WTC11 (cell line): ENCODE measurements at regions of chr7 and their contacts with region 1.

Region 1: GRCh38 chr7:129285111-129285510 is 60.3 kb downstream of the AHCYL2 start:
- DNase-seq: no peak
- ATAC-seq: no peak
- H3K4me3 Mint-ChIP-seq: no peak overlapping the region
- H3K27ac Mint-ChIP-seq: peak overlapping the region; percentile 78; the same call in 1 of the 2 replicates
- H3K4me1 Mint-ChIP-seq: peaks cover 26% of the 10 kb centered on the region
- H3K27me3 Mint-ChIP-seq: no peaks in the 10 kb centered on the region
- CTCF ChIP-seq: no peak

Region 2: DNA sequence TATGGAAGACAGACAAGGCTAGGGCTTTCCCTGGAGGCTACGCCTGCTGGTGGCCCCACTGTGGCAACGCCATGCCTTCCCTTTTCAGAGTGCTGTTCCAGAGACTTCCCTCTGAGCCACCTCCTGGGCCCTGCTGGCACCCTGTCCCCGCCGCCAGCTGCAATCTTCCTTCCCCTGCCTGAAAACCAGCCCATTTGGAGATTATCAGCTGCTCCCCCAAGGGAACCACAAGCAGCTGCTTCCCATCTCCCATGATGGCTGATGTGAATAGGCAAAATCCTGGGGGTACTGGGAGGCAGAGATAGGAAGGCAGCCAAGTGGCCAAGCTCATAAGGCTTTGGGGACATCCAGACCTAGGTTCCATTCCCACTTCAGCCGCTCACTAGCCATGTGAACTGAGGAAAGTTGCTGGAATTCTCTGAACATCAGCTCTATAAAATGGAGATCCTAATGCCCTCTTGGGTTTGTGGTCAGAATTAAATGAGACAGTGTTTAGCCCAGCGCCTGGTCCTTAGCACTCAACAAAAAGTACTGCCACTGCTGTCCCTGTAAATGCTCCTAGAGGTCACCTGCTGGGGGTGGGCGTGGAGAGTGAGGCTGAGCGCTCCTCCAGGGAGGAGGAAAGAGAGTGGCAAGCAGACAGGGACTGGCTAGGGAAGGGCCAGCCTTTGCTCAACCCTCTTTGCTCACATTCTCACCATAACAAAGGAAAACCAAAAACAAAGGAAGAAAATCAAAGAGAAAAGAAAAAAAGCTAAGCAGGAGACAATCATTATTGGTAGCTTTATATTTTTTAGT is 134.7 kb before region 1 on chr7:
- CTCF ChIA-PET with region 1: no interaction called
- POLR2A ChIA-PET with region 1: no interaction called
- DNase-seq: peak; percentile 54
- ATAC-seq: peak; percentile 95
- H3K4me3 Mint-ChIP-seq: no peak overlapping the region
- H3K27ac Mint-ChIP-seq: peak overlapping the region; percentile 26; the same call in 1 of the 2 replicates
- H3K4me1 Mint-ChIP-seq: peaks cover 21% of the 10 kb centered on the region
- H3K27me3 Mint-ChIP-seq: peaks cover 8% of the 10 kb centered on the region
- CTCF ChIP-seq: no peak

Region 3: GRCh38 chr7:129298268-129298893 is 13.3 kb after region 1 on chr7:
- CTCF ChIA-PET with region 1: interaction called, 17 read pairs
- POLR2A ChIA-PET with region 1: no interaction called
- DNase-seq: peak; percentile 50
- ATAC-seq: no peak
- H3K4me3 Mint-ChIP-seq: no peak overlapping the region
- H3K27ac Mint-ChIP-seq: no peak overlapping the region
- H3K4me1 Mint-ChIP-seq: no peaks in the 10 kb centered on the region
- H3K27me3 Mint-ChIP-seq: no peaks in the 10 kb centered on the region
- CTCF ChIP-seq: peak; percentile 48; the same call in 1 of the 2 replicates

Region 4: DNA sequence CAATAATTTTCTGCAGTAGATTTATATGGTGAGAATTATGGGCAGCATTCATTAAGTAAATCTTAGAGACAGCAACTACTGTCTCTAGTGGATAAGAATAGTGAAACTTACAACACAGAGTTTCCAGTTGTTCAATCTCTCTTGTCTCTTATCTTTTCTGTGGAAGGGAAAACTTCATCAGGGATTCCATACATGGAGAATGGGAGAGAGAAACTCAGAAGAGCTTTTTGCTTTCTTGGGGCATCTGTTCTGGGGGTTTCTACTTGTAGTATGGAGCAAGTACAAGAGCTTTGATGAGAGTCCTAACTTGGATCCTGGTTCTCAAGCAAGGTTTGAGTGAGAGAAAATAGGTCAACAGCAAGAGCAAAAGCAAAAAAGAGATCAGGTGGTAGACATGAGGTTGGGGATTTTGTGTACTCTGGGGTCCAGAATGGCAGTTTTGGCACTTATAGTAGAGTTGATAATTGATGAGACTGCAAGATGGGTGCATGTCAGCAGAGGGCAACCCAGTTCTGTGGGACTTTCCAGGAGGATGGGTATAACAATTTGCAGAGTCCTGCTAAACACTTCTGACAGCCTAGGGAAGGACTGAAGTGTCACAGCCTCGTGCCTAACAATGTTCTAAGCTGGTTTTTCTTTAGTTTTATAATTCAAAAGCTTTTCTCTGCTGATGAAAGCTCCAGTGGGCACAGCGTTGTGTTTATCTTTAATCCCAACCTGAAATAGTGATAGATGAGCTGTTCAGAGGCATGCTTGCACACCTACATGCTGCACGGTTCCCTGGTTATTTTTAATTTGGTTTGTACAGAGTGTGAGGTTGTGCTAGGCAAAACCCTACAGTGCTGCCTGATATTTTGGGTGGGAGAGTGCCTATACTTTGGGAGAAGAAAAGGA is 117.1 kb after region 1 on chr7:
- CTCF ChIA-PET with region 1: no interaction called
- POLR2A ChIA-PET with region 1: no interaction called
- DNase-seq: no peak
- ATAC-seq: peak; percentile 51
- H3K4me3 Mint-ChIP-seq: no peak overlapping the region
- H3K27ac Mint-ChIP-seq: no peak overlapping the region
- H3K4me1 Mint-ChIP-seq: peaks cover 17% of the 10 kb centered on the region
- H3K27me3 Mint-ChIP-seq: no peaks in the 10 kb centered on the region
- CTCF ChIP-seq: no peak